ENCODE measurements at regions of chr2 and their contacts with region 1.

Region 1: DNA sequence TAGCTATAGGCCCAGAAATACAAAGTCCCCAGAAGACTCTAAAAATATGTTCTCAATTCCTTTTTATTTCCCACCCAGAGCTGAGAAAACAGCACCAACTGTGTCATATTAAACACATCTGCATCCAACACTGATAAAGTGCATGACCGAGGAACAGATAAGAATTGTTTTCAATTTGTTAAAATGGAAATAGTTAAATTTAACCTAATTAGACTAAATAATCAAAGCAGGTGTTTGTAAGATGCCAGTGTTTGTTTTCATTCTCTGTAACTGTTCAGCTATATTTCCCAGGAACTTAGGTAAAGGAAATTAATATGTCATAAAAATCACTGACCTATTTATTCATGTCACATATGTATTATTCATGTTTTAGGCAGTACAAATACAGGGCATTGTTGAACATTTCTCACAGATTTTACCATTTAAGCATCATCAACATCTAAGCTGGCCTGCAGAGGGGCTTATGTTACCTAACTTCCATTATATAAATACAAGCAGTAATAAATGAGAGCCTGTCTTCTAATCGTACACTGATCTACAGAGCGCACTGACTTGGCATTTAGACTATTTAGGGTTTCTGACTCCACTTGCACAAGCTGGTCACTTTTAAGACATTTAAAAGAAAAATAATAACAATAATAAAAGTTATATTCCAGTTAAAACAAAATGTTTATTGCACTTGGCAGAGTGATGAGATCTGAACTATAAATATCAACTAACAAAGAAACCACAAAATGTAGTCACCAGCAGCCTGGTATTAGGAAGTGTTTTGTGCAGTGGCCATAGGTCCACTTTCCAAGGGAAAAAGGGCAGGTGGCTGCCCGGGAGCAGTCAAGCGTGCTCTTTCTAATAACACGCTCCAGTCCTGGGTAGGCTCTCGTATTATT is 86.6 kb upstream of the ZFP36L2 start:
- DNase-seq: peak; percentile 76
- H3K4me3 Mint-ChIP-seq: no peak overlapping the region
- H3K27ac Mint-ChIP-seq: peak overlapping the region; percentile 63
- H3K4me1 Mint-ChIP-seq: peaks cover 24% of the 10 kb centered on the region
- H3K27me3 Mint-ChIP-seq: no peaks in the 10 kb centered on the region
- CTCF ChIP-seq: no peak

Region 2: DNA sequence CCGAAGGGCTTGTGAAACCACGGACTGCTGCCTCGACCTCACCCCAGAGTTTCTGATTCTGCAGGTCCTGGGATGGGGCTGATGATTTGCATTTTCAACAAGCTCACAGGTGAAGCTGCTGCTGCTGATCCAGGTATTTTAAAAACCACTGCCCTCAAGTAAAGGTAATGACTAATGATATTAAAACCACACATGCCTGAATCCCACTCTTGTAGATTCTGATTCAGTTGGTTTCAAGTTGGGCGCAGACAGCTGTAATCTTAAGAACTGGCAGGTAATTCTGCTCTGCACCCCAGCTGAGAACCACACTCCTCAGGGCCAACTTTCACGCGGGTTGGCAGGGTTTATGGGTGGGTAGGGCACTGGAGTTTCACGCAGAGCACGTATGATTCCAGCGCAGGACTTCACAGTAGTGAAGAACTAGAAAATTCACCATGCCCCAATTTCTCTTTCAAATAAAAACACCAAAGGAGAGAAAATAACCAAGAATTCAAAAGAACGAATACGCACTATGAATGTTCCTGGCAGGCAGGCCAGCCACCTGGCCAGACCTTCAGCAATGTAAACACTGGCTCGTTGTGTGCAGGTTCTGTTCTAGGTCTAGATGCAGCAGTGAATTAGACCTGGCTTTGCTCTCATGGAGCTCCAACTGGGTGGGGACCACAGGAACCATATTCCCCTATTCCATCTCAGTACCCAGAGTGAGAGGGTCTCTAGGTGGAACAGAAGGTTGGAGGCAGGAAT is 12.0 kb before region 1 on chr2:
- CTCF ChIA-PET with region 1: no interaction called
- POLR2A ChIA-PET with region 1: interaction called, 11 read pairs
- intact Hi-C with region 1: no loop called
- DNase-seq: peak; percentile 41
- H3K4me3 Mint-ChIP-seq: no peak overlapping the region
- H3K27ac Mint-ChIP-seq: peak overlapping the region; percentile 68
- H3K4me1 Mint-ChIP-seq: peaks cover 13% of the 10 kb centered on the region
- H3K27me3 Mint-ChIP-seq: no peaks in the 10 kb centered on the region
- CTCF ChIP-seq: no peak

Measured in MCF 10A (cell line).